ENCODE measurements at regions of chr4 and their contacts with region 1.

Region 1: DNA sequence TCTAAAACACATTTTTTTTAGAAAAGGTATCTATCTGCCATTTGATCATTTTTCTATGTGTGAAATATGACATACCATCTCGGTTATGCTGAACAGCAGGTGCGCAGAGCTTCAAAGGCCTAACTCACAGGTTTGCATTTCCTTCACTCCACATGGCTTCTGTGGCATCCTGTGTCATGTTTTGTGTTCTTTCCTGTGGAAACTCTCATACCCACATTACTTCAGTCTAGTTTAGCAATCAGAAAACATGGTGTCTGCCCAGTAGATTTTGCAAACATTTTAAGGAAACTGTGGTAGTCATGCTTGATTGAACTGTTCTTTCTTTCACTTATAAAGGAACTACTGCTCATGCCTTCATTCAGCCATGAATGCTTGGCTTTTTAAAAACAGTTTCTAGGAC is 11.3 kb upstream of the ARAP2 start:
- DNase-seq: peak; percentile 82
- H3K4me3 Mint-ChIP-seq: peak overlapping the region; percentile 59
- H3K27ac Mint-ChIP-seq: peak overlapping the region; percentile 97
- H3K4me1 Mint-ChIP-seq: peaks cover 31% of the 10 kb centered on the region
- H3K27me3 Mint-ChIP-seq: no peaks in the 10 kb centered on the region

Region 2: GRCh38 chr4:36081185-36081584 is 174.4 kb before region 1 on chr4:
- CTCF ChIA-PET with region 1: no interaction called
- DNase-seq: no peak
- H3K4me3 Mint-ChIP-seq: no peak overlapping the region
- H3K27ac Mint-ChIP-seq: no peak overlapping the region
- H3K4me1 Mint-ChIP-seq: peaks cover 4% of the 10 kb centered on the region
- H3K27me3 Mint-ChIP-seq: no peaks in the 10 kb centered on the region

Region 3: DNA sequence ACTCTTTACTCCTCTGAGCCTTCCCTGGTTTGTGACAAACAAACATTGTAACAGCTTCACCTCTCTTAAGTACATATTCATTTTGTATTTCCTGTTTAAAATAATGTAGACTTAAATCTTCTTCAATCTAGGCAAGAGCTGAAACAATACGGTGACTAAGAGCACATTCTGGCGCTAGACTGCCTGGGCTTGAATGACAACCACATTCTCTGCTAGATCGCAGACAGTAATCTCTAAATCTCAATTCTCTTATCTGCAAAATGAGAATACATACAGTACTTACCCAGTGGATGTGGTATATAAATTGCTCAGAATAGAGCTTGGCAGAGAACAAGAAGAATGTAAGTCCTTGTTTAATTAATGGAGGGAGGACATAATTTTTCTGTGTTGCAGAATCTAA is 156.1 kb before region 1 on chr4:
- CTCF ChIA-PET with region 1: no interaction called
- DNase-seq: no peak
- H3K4me3 Mint-ChIP-seq: no peak overlapping the region
- H3K27ac Mint-ChIP-seq: no peak overlapping the region
- H3K4me1 Mint-ChIP-seq: no peaks in the 10 kb centered on the region
- H3K27me3 Mint-ChIP-seq: no peaks in the 10 kb centered on the region

Region 4: GRCh38 chr4:36244257-36245079 is 11.1 kb before region 1 on chr4 and contains the start of gene ARAP2:
- CTCF ChIA-PET with region 1: interaction called, 18 read pairs
- DNase-seq: peak; percentile 75
- H3K4me3 Mint-ChIP-seq: peak within 1 kb of the TSS; percentile 85
- H3K27ac Mint-ChIP-seq: peak within 1 kb of the TSS; percentile 93
- H3K4me1 Mint-ChIP-seq: peaks cover 42% of the 10 kb centered on the region
- H3K27me3 Mint-ChIP-seq: peaks cover 30% of the 10 kb centered on the region

Region 5: GRCh38 chr4:36269101-36269500 is 13.5 kb after region 1 on chr4:
- CTCF ChIA-PET with region 1: interaction called, 15 read pairs
- DNase-seq: peak; percentile 30
- H3K4me3 Mint-ChIP-seq: no peak overlapping the region
- H3K27ac Mint-ChIP-seq: no peak overlapping the region
- H3K4me1 Mint-ChIP-seq: peaks cover 32% of the 10 kb centered on the region
- H3K27me3 Mint-ChIP-seq: no peaks in the 10 kb centered on the region

Region 6: DNA sequence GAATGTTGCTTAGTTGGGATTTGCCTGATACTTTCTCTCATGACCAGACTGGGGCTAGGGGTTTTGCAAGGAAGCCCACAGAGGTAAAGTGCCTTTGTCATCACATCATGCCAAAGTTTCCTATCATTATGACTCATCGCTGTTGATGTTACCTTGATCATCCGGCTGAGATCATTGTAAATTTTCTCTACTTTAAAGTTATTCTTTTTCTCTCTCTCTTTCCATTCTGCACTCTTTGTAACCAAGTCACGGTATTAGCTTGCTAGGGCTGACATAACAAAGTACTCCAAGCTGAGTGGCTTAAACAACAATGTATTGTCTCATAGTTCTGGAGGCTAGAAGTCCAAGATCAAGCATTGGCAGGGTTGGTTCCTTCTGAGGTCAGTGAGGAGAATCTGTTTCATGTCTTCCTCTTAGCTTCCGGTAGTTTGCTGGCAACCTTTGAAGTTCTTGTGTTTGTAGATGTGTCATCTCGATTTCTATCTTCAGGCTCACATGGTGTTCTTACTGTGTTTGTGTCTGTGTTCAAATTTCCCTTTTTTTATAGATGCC is 138.9 kb after region 1 on chr4:
- CTCF ChIA-PET with region 1: interaction called, 56 read pairs
- DNase-seq: peak; percentile 60
- H3K4me3 Mint-ChIP-seq: peak overlapping the region; percentile 13
- H3K27ac Mint-ChIP-seq: peak overlapping the region; percentile 94
- H3K4me1 Mint-ChIP-seq: peaks cover 15% of the 10 kb centered on the region
- H3K27me3 Mint-ChIP-seq: no peaks in the 10 kb centered on the region

Measured in activated naive CD4-positive, alpha-beta T cell treated with anti-CD3 and anti-CD28 coated beads, Interleukin-2, amount 10 ng/mL, durations not matched to agents 7 days and 5 days (primary cell).